Heart right ventricle (tissue), 16 donors: ENCODE measurements at regions of chr22 and their contacts with region 1.

Region 1: GRCh38 chr22:32354360-32355351 is 3.0 kb upstream of the RFPL3 start:
- DNase-seq: no peak
- ATAC-seq: peak in 6 of 8 donors; percentile 11 to 91 (median 56)
- H3K4me3 ChIP-seq: peak overlapping the region in 8 of 10 donors; percentile 3 to 54 (median 23)
- H3K27ac ChIP-seq: peak overlapping the region in 3 of 10 donors; percentile 39 to 63 (median 49)
- H3K4me1 ChIP-seq: no peaks in the 10 kb centered on the region
- H3K27me3 ChIP-seq: no peaks in the 10 kb centered on the region
- CTCF ChIP-seq: peak in 2 of 9 donors; percentile 8 to 10

Region 2: DNA sequence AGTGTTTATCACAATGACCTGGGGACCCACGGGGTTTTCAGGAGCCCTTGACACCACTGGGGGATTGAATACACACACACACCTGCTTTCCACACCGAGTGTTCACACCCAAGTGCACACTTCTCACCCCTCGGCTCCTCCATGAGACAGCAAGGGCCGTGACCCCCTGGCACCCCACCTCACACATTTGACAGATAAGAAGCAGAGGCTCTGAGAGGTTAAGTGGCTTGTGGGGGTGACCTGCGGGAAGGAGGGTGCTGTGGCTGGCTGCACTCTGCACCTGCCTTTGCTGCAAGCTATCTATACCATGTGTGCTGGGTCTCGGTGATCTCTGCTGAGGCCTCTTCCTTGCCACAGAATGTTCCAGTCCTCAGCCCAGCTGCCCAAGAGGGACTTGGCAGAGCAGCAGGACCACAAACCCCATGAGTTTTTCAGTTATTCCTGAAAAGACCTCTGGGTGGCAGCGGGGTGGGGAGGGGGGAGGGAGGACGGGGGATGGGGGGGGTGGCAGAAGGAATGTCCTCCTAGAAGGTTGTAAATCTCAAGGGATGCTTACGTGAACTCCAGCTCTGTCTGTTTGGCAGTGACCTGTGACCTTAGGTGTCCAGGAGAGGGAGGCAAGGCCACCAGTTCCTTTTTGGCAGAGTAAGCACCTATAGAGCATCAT is 44.9 kb before region 1 on chr22:
- intact Hi-C with region 1: loop called in 1 of 10 experiments (anchors 5 kb)
- DNase-seq: no peak
- ATAC-seq: no peak
- H3K4me3 ChIP-seq: no peak overlapping the region
- H3K27ac ChIP-seq: no peak overlapping the region
- H3K4me1 ChIP-seq: no peaks in the 10 kb centered on the region
- H3K27me3 ChIP-seq: peaks cover 0 to 26% (median 10%) of the 10 kb centered on the region in 7 donors
- CTCF ChIP-seq: no peak

Region 3: GRCh38 chr22:32319861-32320406 is 34.7 kb before region 1 on chr22:
- intact Hi-C with region 1: no loop called
- DNase-seq: no peak
- ATAC-seq: no peak
- H3K4me3 ChIP-seq: no peak overlapping the region
- H3K27ac ChIP-seq: no peak overlapping the region
- H3K4me1 ChIP-seq: no peaks in the 10 kb centered on the region
- H3K27me3 ChIP-seq: peaks cover 0 to 6% (median 0%) of the 10 kb centered on the region in 7 donors
- CTCF ChIP-seq: no peak

Region 4: GRCh38 chr22:32426156-32426555 is 71.5 kb after region 1 on chr22:
- intact Hi-C with region 1: no loop called
- DNase-seq: no peak
- ATAC-seq: no peak
- H3K4me3 ChIP-seq: no peak overlapping the region
- H3K27ac ChIP-seq: no peak overlapping the region
- H3K4me1 ChIP-seq: no peaks in the 10 kb centered on the region
- H3K27me3 ChIP-seq: peaks cover 0 to 38% (median 17%) of the 10 kb centered on the region in 7 donors
- CTCF ChIP-seq: no peak